ENCODE measurements at regions of chr1 and their contacts with region 1.

Region 1: GRCh38 chr1:114164840-114165553 is 11.3 kb upstream of the SYT6 start:
- DNase-seq: no peak
- ATAC-seq: no peak
- H3K4me3 ChIP-seq: no peak overlapping the region
- H3K27ac ChIP-seq: no peak overlapping the region
- H3K4me1 ChIP-seq: no peaks in the 10 kb centered on the region
- H3K27me3 ChIP-seq: peaks cover 12% of the 10 kb centered on the region
- CTCF ChIP-seq: no peak
- POLR2A ChIP-seq: no peak
- RAD21 ChIP-seq: no peak

Region 2: DNA sequence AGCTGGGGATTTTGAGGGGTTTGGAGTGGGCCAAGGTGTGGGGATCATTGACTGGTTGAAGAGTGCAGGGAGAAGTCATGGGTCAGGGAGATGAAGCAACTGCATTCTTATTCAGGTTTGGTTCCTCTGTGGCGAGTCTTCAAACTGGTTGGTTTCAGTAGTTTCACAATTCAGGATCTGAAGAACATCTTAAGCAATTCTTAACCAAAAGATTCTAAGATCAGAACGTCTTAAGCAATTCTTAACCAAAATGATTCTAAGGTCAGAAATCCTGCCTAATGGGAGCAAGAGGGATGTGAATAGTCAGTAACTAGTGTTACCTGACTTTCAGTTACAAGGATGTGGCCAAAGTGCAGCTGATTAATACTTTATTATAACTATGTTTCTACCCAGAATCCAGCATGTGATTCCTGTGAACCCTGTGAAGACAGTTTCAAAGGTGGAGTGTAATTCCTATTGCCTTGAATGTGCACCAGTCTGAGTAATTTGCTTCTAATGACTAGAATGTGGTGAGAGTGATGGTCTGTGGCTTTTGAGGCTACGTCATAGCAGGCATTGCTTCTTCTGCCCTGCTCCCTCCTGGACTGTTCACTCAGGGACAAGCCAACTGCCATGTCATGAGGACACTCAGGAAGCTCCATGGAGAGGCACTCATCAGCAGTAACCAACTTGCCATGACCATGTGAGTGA is 124.5 kb before region 1 on chr1:
- CTCF ChIA-PET with region 1: no interaction called
- POLR2A ChIA-PET with region 1: no interaction called
- dilution Hi-C with region 1: no loop called
- in situ Hi-C with region 1: no loop called
- intact Hi-C with region 1: no loop called
- DNase-seq: no peak
- ATAC-seq: no peak
- H3K4me3 ChIP-seq: no peak overlapping the region
- H3K27ac ChIP-seq: no peak overlapping the region
- H3K4me1 ChIP-seq: no peaks in the 10 kb centered on the region
- H3K27me3 ChIP-seq: peaks cover 27% of the 10 kb centered on the region
- CTCF ChIP-seq: no peak
- POLR2A ChIP-seq: no peak
- RAD21 ChIP-seq: no peak

Region 3: GRCh38 chr1:114122941-114123618 is 41.9 kb before region 1 on chr1:
- CTCF ChIA-PET with region 1: no interaction called
- POLR2A ChIA-PET with region 1: no interaction called
- dilution Hi-C with region 1: no loop called
- in situ Hi-C with region 1: no loop called
- intact Hi-C with region 1: loop called (anchors 1 kb)
- DNase-seq: peak; percentile 33
- ATAC-seq: no peak
- H3K4me3 ChIP-seq: no peak overlapping the region
- H3K27ac ChIP-seq: no peak overlapping the region
- H3K4me1 ChIP-seq: no peaks in the 10 kb centered on the region
- H3K27me3 ChIP-seq: peaks cover 11% of the 10 kb centered on the region
- CTCF ChIP-seq: no peak
- POLR2A ChIP-seq: no peak
- RAD21 ChIP-seq: no peak

Region 4: DNA sequence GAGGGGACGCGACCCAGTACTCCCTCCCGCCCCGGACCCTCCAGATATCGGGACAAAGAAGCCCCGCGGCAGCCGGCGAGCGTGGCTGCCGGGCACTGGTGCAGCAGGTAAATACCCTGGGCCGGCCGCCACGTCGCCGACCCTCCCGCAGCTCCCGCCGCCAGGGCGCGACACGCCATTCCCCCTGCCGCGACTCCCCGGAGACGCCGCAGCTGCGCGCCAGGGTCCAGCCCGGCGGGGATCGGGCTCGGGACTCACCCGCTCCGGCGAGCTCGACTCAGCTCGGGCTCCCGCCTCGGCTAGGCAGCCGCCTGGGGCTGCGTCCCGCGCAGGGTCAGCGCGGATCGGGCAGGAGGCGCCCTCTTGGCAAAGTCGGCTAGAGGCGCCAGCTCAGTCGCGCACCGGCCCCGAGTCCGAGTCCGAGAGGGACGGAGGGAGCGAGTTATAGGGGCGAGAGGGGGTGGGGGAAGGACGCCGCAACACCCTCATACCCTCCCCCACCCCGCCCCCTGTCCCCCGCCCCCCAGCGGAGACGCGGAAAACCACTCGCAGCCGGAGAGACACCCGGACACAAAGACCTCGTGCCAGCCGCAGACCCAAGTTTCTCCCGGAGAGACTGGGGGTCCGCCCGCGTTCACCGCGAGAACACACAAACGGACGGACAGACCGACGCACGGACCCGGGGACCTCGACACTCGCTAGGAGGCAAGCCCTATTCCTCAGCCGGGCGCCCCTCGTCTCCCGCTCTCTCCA is 12.3 kb before region 1 on chr1:
- CTCF ChIA-PET with region 1: no interaction called
- POLR2A ChIA-PET with region 1: no interaction called
- dilution Hi-C with region 1: no loop called
- in situ Hi-C with region 1: no loop called
- intact Hi-C with region 1: no loop called
- DNase-seq: peak; percentile 24
- ATAC-seq: peak; percentile 88
- H3K4me3 ChIP-seq: no peak overlapping the region; the same call in 1 of the 2 replicates
- H3K27ac ChIP-seq: no peak overlapping the region
- H3K4me1 ChIP-seq: no peaks in the 10 kb centered on the region; the same call in 1 of the 2 replicates
- H3K27me3 ChIP-seq: peaks cover 80% of the 10 kb centered on the region
- CTCF ChIP-seq: no peak
- POLR2A ChIP-seq: no peak
- RAD21 ChIP-seq: no peak